ENCODE measurements at regions of chr16 and their contacts with region 1.

Region 1: GRCh38 chr16:30715737-30716445 is 16.9 kb downstream of the SRCAP start:
- DNase-seq: peak; percentile 17

Region 2: GRCh38 chr16:30692381-30693064 is 23.4 kb before region 1 on chr16:
- intact Hi-C with region 1: no loop called
- DNase-seq: no peak

Region 3: GRCh38 chr16:30740364-30741251 is 24.7 kb after region 1 on chr16:
- intact Hi-C with region 1: loop called in 1 of 2 experiments (anchors 2 kb)
- DNase-seq: peak; percentile 95

Region 4: DNA sequence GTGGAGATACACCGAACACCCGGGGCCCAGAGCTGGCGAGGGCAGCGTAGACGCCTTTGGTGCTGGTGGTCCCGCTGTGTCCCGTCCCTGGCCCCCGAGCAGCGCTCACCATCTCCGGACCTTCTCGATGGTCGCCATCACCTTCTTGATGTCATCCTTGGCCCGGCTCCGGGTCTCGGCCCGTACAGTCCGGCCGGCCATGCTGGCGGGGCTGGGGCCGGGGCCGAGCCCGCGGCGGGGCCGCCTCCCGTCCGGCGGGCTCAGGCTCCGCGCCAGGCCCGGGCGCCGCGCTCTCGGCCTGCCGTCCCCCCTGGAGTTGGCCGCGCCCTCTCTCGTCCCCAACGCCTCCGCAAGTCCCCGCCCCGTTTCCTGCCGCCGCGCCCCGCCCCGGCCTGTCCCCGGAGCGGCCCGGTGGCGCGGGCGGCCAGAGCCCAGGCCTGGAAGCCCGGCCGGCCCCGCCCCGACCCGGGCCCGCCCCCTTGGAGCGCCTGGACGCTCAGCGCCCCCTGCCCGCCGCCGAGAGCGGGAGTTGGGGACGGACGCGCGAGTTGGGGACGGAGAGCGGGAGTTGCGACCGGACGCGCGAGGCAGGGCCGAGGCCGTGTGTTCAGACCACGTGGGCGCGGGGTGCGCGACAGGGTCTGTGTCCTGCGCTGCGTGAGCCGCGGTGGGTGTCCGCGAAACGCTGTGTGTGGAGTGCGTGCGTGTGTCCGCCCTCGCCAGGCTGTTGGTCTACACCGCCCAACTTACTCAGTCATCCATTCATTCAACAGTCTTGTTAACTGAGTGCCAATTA is 178.1 kb after region 1 on chr16 and contains the start of gene BCL7C:
- intact Hi-C with region 1: no loop called
- DNase-seq: peak; percentile 96
- total RNA-seq, gene BCL7C: 33.6 to 36.3 TPM

Region 5: GRCh38 chr16:31084616-31085260 is 368.8 kb after region 1 on chr16:
- intact Hi-C with region 1: loop called in 1 of 2 experiments (anchors 10 kb)
- DNase-seq: no peak

Measured in posterior vena cava (tissue), 2 donors.